ENCODE measurements at regions of chr14 and their contacts with region 1.

Region 1: DNA sequence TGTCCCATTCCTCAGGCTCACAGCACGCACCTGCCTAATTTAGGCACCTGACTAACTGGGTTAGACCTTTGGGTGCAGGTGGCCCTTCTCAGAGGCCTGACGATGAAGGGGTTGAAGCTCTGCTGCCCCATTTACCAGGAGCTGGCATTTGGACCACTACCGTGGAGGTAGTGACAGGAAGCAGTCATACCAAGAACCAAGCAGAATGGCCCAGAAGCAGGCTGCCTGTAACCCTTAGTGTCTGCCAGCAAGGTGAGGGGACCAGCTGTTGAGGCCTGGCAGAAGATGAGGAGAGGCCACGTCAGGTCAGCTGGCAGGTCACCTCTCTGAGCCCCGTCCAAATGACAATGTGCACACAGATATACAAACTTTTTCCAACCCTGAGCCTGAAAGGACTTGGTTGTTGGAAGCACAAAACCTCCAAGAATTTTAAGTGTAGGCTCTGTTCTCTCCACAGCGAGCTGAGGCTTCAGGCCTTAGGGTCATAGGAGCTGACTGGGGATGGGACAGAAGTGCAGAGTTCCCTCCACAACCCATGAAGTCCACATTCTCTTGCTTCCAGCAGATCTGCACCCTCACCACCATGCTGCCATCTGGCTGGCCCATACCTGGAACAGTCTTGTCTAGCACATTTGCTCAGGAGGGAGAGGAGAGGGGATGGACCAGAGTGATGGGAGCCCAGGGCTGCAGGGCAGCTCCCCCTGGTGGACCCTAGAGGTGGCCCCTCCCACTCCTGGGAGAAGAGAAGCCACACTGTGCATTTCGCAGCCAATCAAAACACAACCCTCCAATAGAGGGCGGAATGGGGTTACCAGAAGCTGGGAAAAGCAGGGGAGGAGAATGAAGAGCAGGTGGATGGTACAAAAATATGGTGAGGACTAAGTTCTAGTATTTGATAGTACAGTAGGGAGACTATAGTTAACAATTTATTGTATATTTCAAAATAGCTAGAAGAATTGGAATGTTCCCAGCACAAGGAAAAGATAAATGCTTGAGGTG is 23.3 kb downstream of the VASH1 start:
- DNase-seq: no peak
- ATAC-seq: peak; percentile 99
- H3K4me3 ChIP-seq: no peak overlapping the region
- H3K27ac ChIP-seq: no peak overlapping the region
- H3K4me1 ChIP-seq: peaks cover 15% of the 10 kb centered on the region
- H3K27me3 ChIP-seq: no peaks in the 10 kb centered on the region
- CTCF ChIP-seq: peak; percentile 58 to 80 (median 75)
- EP300 ChIP-seq: no peak
- POLR2A ChIP-seq: no peak
- RAD21 ChIP-seq: peak; percentile 57

Region 2: DNA sequence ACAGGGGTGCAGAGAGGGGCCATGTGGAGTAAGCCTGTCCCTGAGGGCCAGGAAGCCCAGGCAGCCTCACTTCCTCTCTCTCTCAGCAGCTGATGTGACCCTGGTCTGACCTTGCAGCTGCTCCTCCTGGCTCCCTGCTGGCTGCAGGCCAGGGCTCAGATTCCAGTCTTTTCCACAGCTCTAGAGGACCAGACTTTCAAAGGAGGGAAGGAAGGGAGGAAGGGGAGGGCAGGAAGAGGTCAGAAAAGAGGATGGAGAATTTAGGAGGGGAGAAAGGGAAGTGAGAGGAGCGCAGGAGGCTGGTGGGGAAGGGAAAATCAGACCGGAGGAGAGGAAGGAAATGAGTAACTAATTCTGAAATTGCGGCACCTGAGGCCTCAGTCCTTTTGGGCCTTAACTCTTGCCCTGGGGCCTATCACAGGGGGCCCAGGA is 64.2 kb before region 1 on chr14:
- CTCF ChIA-PET with region 1: interaction called, 13 read pairs
- POLR2A ChIA-PET with region 1: no interaction called
- RAD21 ChIA-PET with region 1: interaction called, 3 read pairs
- SMC1A ChIA-PET with region 1: no interaction called
- in situ Hi-C with region 1: loop called (anchors 5 kb)
- intact Hi-C with region 1: no loop called
- DNase-seq: peak; percentile 34
- ATAC-seq: peak; percentile 89
- H3K4me3 ChIP-seq: no peak overlapping the region
- H3K27ac ChIP-seq: peak overlapping the region; percentile 61
- H3K4me1 ChIP-seq: peaks cover 14% of the 10 kb centered on the region
- H3K27me3 ChIP-seq: no peaks in the 10 kb centered on the region
- CTCF ChIP-seq: no peak
- EP300 ChIP-seq: no peak
- POLR2A ChIP-seq: no peak
- RAD21 ChIP-seq: no peak

Region 3: GRCh38 chr14:76767681-76768656 is 16.6 kb before region 1 on chr14:
- CTCF ChIA-PET with region 1: interaction called, 13 read pairs
- POLR2A ChIA-PET with region 1: interaction called, 3 read pairs
- RAD21 ChIA-PET with region 1: no interaction called
- SMC1A ChIA-PET with region 1: interaction called, 5 read pairs
- in situ Hi-C with region 1: no loop called
- intact Hi-C with region 1: no loop called
- DNase-seq: peak; percentile 47
- ATAC-seq: peak; percentile 97
- H3K4me3 ChIP-seq: no peak overlapping the region
- H3K27ac ChIP-seq: no peak overlapping the region
- H3K4me1 ChIP-seq: peaks cover 13% of the 10 kb centered on the region
- H3K27me3 ChIP-seq: no peaks in the 10 kb centered on the region; a peak in 1 of 4 replicates
- CTCF ChIP-seq: no peak
- EP300 ChIP-seq: no peak
- POLR2A ChIP-seq: peak; percentile 36; the same call in 1 of the 2 replicates
- RAD21 ChIP-seq: no peak

Measured in GM12878 (cell line).